Head of caudate nucleus (tissue), 42 donors: ENCODE measurements at regions of chr7 and their contacts with region 1.

Region 1: GRCh38 chr7:128904381-128905197 is 5.9 kb downstream of the KCP start:
- DNase-seq: peak in 3 of 42 donors; percentile 5 to 35 (median 22)

Region 2: DNA sequence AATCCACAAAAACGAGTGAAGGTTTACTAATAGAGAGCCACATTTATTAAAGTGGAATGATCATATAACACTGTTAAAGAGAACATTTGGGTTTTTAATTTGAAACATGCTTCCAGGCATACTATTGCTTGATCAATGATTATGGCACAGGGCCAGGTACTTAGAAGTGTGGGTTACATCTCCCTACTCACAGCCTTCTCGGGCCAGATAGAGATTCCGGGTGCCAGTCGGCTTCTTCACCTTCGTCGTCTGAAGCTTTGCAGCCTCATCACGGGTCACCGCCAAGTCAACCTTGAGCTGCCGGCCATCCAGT is 580.3 kb before region 1 on chr7:
- intact Hi-C with region 1: no loop called
- DNase-seq: no peak

Region 3: GRCh38 chr7:129091484-129092002 is 187.0 kb after region 1 on chr7:
- intact Hi-C with region 1: loop called (anchors 10 kb)
- DNase-seq: peak; percentile 30 to 92 (median 82)